T-cell (primary cell): ENCODE measurements at regions of chr12 and their contacts with region 1.

Region 1: GRCh38 chr12:45933504-45933903 is 56.9 kb downstream of the SCAF11 start:
- DNase-seq: no peak
- ATAC-seq: no peak
- H3K4me3 ChIP-seq: no peak overlapping the region
- H3K4me3 Mint-ChIP-seq: no peak overlapping the region
- H3K27ac ChIP-seq: no peak overlapping the region
- H3K27ac Mint-ChIP-seq: peak overlapping the region in 1 of 2 donors; percentile 7
- H3K4me1 ChIP-seq: no peaks in the 10 kb centered on the region
- H3K4me1 Mint-ChIP-seq: peaks cover 0 to 15% (median 10%) of the 10 kb centered on the region in 3 donors
- H3K27me3 ChIP-seq: no peaks in the 10 kb centered on the region
- H3K27me3 Mint-ChIP-seq: no peaks in the 10 kb centered on the region

Region 2: DNA sequence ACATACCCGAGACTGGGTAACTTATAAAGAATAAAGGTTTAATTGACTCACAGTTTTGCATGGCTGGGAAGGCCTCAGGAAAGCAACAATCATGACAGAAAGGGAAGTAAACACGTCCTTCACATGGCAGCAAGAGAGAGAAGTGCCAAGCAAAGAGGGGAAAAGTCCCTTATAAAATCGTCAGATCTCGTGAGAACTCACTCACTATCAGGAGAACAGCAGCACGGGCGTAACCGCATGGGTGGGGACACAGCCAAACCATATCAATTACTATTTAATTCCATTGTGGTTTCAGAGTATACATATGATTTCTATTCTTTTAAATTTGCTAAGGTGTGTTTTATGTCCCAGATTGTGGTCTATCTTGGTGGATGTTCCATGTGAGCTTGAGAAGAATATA is 61.1 kb before region 1 on chr12:
- CTCF ChIA-PET with region 1: no interaction called
- POLR2A ChIA-PET with region 1: no interaction called
- DNase-seq: no peak
- ATAC-seq: no peak
- H3K4me3 ChIP-seq: no peak overlapping the region
- H3K4me3 Mint-ChIP-seq: no peak overlapping the region
- H3K27ac ChIP-seq: no peak overlapping the region
- H3K27ac Mint-ChIP-seq: no peak overlapping the region
- H3K4me1 ChIP-seq: peaks cover 0 to 6% of the 10 kb centered on the region in 2 experiments
- H3K4me1 Mint-ChIP-seq: peaks cover 24 to 33% (median 26%) of the 10 kb centered on the region in 3 donors
- H3K27me3 ChIP-seq: no peaks in the 10 kb centered on the region
- H3K27me3 Mint-ChIP-seq: no peaks in the 10 kb centered on the region

Region 3: GRCh38 chr12:45944771-45945170 is 11.3 kb after region 1 on chr12:
- CTCF ChIA-PET with region 1: no interaction called
- POLR2A ChIA-PET with region 1: no interaction called
- DNase-seq: no peak
- ATAC-seq: no peak
- H3K4me3 ChIP-seq: no peak overlapping the region
- H3K4me3 Mint-ChIP-seq: no peak overlapping the region
- H3K27ac ChIP-seq: no peak overlapping the region
- H3K27ac Mint-ChIP-seq: peak overlapping the region; percentile 16 to 40
- H3K4me1 ChIP-seq: no peaks in the 10 kb centered on the region
- H3K4me1 Mint-ChIP-seq: peaks cover 14 to 27% (median 20%) of the 10 kb centered on the region in 3 donors
- H3K27me3 ChIP-seq: no peaks in the 10 kb centered on the region
- H3K27me3 Mint-ChIP-seq: no peaks in the 10 kb centered on the region

Region 4: GRCh38 chr12:47166365-47166764 is 1232.9 kb after region 1 on chr12:
- CTCF ChIA-PET with region 1: no interaction called
- POLR2A ChIA-PET with region 1: interaction called in 1 of 2 experiments, 14 read pairs
- DNase-seq: no peak
- ATAC-seq: no peak
- H3K4me3 ChIP-seq: no peak overlapping the region
- H3K4me3 Mint-ChIP-seq: no peak overlapping the region
- H3K27ac ChIP-seq: no peak overlapping the region
- H3K27ac Mint-ChIP-seq: no peak overlapping the region
- H3K4me1 ChIP-seq: no peaks in the 10 kb centered on the region
- H3K4me1 Mint-ChIP-seq: peaks cover 26 to 35% (median 27%) of the 10 kb centered on the region in 3 donors
- H3K27me3 ChIP-seq: no peaks in the 10 kb centered on the region
- H3K27me3 Mint-ChIP-seq: no peaks in the 10 kb centered on the region